Activated CD8-positive, alpha-beta memory T cell treated with anti-CD3 and anti-CD28 coated beads, Interleukin-2, amount 10 ng/mL, durations not matched to agents 7 days and 5 days (primary cell): ENCODE measurements at regions of chr1 and their contacts with region 1.

Region 1: DNA sequence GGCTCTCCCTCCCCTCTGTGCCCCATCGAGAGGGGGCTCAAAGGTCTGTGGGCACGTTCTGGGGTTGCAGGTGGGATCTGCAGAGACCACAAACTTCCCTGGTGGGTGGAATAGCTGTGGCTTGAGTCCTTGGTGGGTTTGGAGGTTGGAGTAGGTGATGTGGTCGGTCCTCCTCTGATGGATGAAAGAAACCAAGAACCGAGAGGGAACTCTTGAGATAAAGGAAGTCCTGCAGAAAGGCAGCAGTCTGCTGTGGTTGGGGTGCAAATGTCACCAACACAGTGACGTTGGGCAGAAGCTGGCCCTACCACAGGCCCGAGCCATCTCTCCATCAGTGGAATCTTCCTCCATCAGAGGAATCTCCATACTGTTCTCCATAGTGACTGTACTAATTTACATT is 171.8 kb downstream of the FCRL5 start:
- DNase-seq: no peak
- ATAC-seq: no peak
- H3K4me3 Mint-ChIP-seq: no peak overlapping the region
- H3K27ac Mint-ChIP-seq: no peak overlapping the region
- H3K4me1 Mint-ChIP-seq: peaks cover 7% of the 10 kb centered on the region
- H3K27me3 Mint-ChIP-seq: peaks cover 41% of the 10 kb centered on the region

Region 2: DNA sequence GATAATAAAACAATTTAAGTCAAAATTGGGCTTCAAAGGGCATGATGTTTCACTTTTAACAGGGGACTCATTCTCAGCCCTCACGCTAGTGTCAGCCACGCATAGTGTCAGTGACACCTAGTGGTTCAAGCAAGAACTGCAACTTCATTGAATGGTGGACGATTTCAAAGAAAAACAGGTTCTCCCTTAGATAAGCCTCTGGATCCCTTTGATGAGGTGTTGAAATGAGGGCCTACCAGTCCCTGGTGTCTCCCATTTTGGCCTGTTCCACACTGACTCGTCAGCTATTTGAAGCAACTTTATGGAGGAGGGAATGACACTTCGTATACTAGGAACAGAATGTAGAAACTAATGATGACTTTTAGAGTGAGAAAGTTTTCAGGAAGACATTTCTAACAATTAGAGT is 115.6 kb after region 1 on chr1:
- CTCF ChIA-PET with region 1: interaction called, 12 read pairs
- DNase-seq: peak; percentile 54
- ATAC-seq: peak; percentile 63
- H3K4me3 Mint-ChIP-seq: no peak overlapping the region
- H3K27ac Mint-ChIP-seq: no peak overlapping the region
- H3K4me1 Mint-ChIP-seq: peaks cover 2% of the 10 kb centered on the region
- H3K27me3 Mint-ChIP-seq: peaks cover 55% of the 10 kb centered on the region